Activated CD4-positive, alpha-beta memory T cell treated with anti-CD3 and anti-CD28 coated beads for 36 hours (primary cell): ENCODE measurements at regions of chr7 and their contacts with region 1.

Region 1: GRCh38 chr7:130668257-130669084 is at the start of gene COPG2:
- DNase-seq: peak; percentile 84
- H3K4me3 Mint-ChIP-seq: peak within 1 kb of the TSS; percentile 84
- H3K27ac Mint-ChIP-seq: peak within 1 kb of the TSS; percentile 65
- H3K4me1 Mint-ChIP-seq: peaks cover 18% of the 10 kb centered on the region
- H3K27me3 Mint-ChIP-seq: peaks cover 4% of the 10 kb centered on the region
- total RNA-seq, gene COPG2: 31.5 to 33.4 TPM

Region 2: DNA sequence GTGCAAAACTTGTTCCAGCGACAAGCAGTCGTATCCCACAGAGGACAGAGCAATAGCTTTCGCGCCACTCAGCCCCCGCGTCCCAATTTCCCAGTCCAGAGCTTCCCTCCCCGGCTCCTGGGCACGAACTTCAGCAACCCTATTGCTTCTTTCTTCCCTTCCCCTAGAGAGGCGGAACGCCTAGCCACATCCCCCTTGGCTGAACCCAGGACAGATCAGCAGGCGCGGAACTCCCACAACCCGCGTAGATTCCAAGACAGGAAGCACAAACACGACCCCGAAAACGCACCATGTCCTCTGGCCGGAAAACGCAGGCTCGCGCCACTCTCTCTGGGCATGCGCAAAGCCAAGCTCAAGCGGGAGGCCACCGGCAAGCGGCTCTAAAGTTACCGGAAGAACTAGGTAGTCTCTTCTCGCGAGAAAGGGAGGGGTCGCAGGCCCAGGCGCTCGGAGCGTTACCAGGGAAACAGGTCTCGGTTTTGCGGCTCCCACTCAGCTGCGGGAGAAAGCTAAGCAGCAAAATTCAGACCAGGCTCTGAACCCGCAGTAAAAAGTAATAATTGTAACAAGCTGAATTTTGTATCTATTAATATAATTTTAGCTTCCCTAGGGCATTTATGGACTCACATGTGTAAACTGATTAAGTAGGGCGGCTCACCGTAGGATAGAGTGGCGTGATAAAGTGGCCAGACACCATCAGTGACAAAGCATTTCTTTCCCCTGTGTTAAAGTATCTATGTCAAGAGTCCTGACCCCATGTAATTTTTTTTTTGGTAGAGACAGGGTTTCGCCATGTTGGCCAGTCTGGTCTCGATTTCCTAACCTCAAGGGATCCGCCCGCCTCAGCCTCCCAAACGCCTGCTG is 463.2 kb before region 1 on chr7 and contains the start of gene TMEM209:
- CTCF ChIA-PET with region 1: no interaction called
- POLR2A ChIA-PET with region 1: no interaction called
- intact Hi-C with region 1: loop called (anchors 10 kb)
- DNase-seq: peak; percentile 97
- H3K4me3 Mint-ChIP-seq: peak within 1 kb of the TSS; percentile 96
- H3K27ac Mint-ChIP-seq: peak within 1 kb of the TSS; percentile 98
- H3K4me1 Mint-ChIP-seq: peaks cover 21% of the 10 kb centered on the region
- H3K27me3 Mint-ChIP-seq: peaks cover 2% of the 10 kb centered on the region
- total RNA-seq, gene TMEM209: 35.5 to 35.9 TPM

Region 3: GRCh38 chr7:130649004-130649790 is 19.3 kb before region 1 on chr7:
- CTCF ChIA-PET with region 1: no interaction called
- POLR2A ChIA-PET with region 1: no interaction called
- intact Hi-C with region 1: loop called (anchors 1 kb)
- DNase-seq: peak; percentile 42
- H3K4me3 Mint-ChIP-seq: peak overlapping the region; percentile 30
- H3K27ac Mint-ChIP-seq: peak overlapping the region; percentile 86
- H3K4me1 Mint-ChIP-seq: peaks cover 40% of the 10 kb centered on the region
- H3K27me3 Mint-ChIP-seq: no peaks in the 10 kb centered on the region

Region 4: GRCh38 chr7:130896898-130897514 is 228.5 kb after region 1 on chr7:
- CTCF ChIA-PET with region 1: no interaction called
- POLR2A ChIA-PET with region 1: no interaction called
- intact Hi-C with region 1: no loop called
- DNase-seq: peak; percentile 84
- H3K4me3 Mint-ChIP-seq: peak overlapping the region; percentile 43
- H3K27ac Mint-ChIP-seq: peak overlapping the region; percentile 89
- H3K4me1 Mint-ChIP-seq: peaks cover 95% of the 10 kb centered on the region
- H3K27me3 Mint-ChIP-seq: peaks cover 6% of the 10 kb centered on the region